Posterior cingulate gyrus (tissue), 11 donors: ENCODE measurements at regions of chr5 and their contacts with region 1.

Region 1: GRCh38 chr5:98905857-98906690 is 22.7 kb downstream of the CHD1 start:
- DNase-seq: no peak

Region 2: GRCh38 chr5:98846518-98846917 is 59.6 kb before region 1 on chr5:
- intact Hi-C with region 1: no loop called
- DNase-seq: no peak

Region 3: GRCh38 chr5:98872674-98873073 is 33.4 kb before region 1 on chr5:
- intact Hi-C with region 1: no loop called
- DNase-seq: no peak

Region 4: DNA sequence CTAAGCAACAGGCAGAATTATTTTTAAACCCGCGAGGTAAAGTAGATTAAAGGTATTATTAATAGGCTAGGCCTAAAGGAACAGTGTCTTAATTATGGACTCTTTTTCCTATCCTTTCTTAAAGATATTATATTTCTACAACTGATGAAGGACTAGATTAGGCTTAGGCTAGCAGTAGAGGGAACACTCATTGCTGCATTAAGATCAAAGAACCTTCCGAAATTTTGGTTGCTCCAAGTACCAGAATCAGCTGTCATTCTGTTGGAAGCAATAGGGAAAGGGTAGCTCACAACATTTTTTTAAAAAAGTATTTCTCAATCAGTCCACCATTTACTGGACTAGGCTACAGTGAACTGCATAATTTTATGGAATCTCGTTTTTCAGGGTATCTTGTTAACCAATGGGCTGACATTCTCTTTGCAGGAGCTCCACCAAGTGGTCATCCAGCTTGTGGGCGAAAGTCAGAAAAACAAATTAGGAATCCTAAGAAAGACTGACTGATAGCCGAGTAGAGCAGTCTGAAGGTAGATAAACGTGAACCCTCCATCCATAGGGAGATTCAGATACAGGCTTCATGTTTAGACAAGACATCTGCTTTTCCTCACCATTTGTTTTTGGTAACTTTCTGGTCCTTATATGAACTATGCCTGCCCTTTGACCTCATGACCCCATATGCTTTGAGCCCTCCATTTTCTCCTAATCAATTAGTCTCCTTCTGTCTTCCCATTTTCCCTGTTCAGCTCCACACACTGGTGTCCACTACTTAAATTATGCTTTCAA is 126.3 kb after region 1 on chr5:
- intact Hi-C with region 1: loop called (anchors 1 kb)
- DNase-seq: peak in 6 of 10 donors; percentile 21 to 85 (median 61)

Region 5: DNA sequence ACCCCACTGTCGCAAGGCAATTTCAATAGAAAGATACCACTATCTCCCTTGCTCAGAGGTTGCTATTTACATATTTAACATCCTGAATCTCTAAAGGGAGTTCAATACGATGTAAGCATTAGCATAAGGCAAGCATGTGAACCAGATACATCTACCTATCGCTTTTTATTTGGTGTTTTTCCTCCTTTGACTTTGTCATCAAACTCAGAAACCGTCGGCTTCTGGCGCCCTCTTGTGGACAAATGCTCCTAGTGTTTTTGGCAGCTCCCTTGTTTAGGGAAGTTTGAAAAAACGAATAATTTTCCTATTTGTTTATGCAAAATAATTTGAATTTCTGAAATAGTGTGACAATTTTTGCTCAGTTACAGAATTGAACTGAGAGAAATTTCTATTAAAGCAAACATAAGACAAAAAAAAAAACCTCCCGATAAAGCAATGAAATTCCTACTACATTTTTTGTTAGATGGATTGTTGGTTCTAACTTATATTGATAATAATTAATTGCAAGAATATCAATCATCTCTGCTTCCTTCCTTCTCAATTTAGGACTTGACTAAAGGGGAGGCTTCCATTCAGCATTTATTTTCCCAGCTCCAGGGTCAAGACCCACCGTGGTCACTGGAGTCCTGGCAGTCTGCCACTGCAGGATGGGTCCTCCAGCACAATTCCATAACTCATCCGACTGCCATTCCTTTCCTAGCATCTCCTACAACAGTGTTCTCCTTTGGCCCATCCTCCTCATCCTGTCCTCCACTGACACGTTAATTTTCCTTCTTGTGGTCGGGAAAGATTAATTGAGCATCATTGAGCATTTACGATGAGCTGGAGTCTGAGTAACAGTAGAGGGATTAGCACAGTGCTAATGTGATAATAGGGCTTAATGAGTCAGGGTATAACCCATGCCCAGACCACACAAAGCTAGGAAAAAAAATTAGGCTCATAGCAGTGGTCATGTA is 154.5 kb after region 1 on chr5:
- intact Hi-C with region 1: loop called (anchors 10 kb)
- DNase-seq: peak; percentile 35 to 95 (median 74)